Gastrocnemius medialis (tissue), 4 donors: ENCODE measurements at regions of chr16 and their contacts with region 1.

Region 1: DNA sequence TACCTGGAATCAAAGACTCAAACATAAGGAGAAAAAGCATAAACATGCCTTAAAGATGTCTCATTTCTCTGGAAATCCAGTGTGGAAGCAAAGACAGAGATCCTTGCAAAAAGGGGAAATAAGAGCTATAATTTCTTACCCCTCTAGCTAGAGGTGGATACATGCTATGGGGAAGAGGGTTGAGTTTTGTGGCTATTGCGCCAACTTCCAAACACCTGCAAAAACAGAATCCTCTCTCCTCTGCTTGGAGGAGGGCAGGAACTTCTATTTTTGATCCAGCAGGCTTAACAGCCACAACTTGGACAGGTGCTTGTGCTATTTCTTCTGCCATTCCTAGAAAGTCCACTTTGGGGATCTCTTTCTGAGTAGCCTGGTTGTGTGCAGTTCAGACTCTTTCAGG is 21.5 kb upstream of the NUDT7 start:
- DNase-seq: no peak
- ATAC-seq: no peak
- H3K4me3 ChIP-seq: no peak overlapping the region
- H3K27ac ChIP-seq: no peak overlapping the region
- H3K4me1 ChIP-seq: no peaks in the 10 kb centered on the region
- H3K27me3 ChIP-seq: no peaks in the 10 kb centered on the region
- CTCF ChIP-seq: no peak
- POLR2A ChIP-seq: no peak

Region 2: DNA sequence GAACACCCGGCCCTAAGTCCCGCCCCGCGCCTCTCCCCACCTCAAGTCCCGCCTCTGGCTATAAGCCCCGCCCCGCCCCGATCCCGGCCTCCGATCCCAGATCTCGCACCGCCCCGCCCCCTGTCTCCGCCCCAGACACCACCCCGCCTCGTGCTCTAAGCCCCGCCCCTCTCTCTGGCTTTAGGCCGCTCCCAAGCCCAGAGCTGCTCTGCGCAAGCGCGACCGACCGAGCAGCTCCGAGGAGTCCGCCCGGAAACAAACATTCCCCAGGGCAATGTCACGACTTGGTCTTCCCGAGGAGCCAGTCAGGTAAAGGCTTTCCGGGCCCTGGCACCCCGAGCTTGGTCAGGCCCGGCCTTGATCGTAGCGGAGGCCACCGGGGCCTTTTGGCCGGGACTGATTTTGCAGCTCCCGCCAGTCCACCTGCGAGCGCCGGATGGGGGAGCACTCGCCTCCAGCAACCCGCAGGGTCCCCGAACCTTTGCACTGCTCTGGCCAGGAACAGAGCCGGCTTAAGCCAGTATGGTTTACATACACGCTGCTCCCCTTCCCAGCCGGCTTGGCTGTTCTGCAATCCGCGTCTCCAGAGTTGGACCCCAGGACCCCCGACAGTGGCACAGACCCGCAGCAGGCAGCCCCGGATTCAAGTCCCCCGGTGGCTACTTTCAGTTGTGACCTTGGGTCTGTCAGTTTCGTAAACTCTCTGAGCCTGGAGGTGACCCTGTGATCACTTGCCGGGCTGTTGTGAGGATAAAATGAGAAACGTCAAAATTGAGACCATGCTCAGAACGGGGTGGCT is 21.7 kb after region 1 on chr16 and contains the start of gene NUDT7:
- in situ Hi-C with region 1: no loop called
- intact Hi-C with region 1: no loop called
- DNase-seq: peak; percentile 96 to 97
- ATAC-seq: peak; percentile 98 to 99
- H3K4me3 ChIP-seq: peak within 1 kb of the TSS; percentile 71 to 99 (median 84)
- H3K27ac ChIP-seq: peak within 1 kb of the TSS; percentile 85 to 87 (median 86)
- H3K4me1 ChIP-seq: peaks cover 5 to 6% of the 10 kb centered on the region in 2 donors
- H3K27me3 ChIP-seq: no peaks in the 10 kb centered on the region
- CTCF ChIP-seq: no peak
- POLR2A ChIP-seq: peak; percentile 38 to 40
- total RNA-seq, gene NUDT7: 2.3 to 11.0 (median 3.4) TPM

Region 3: GRCh38 chr16:77759821-77760220 is 59.0 kb after region 1 on chr16:
- in situ Hi-C with region 1: loop called in 1 of 4 experiments (anchors 10 kb)
- intact Hi-C with region 1: no loop called
- DNase-seq: no peak
- ATAC-seq: no peak
- H3K4me3 ChIP-seq: no peak overlapping the region
- H3K27ac ChIP-seq: no peak overlapping the region
- H3K4me1 ChIP-seq: no peaks in the 10 kb centered on the region
- H3K27me3 ChIP-seq: no peaks in the 10 kb centered on the region
- CTCF ChIP-seq: no peak
- POLR2A ChIP-seq: no peak

Region 4: DNA sequence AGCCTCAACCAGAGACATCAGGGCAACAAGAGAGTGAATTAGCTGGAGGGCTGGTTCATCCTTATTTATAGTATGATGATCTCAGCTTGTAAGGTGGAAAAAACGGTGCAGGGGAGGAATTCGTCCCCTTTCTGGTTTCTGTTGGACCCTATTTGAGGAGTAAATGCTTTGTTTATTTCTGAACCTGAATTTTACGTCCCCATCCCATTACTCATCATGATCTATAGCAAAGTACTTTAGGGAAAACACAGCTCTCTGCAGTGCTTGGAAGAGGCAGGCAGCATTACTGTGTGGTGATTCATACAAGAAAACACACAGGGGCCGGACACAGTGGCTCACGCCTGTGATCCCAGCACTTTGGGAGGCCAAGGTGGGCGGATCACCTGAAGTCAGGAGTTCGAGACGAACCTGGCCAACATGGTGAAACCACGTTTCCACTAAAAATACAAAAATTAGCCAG is 79.6 kb after region 1 on chr16:
- in situ Hi-C with region 1: no loop called
- intact Hi-C with region 1: no loop called
- DNase-seq: no peak
- ATAC-seq: no peak
- H3K4me3 ChIP-seq: no peak overlapping the region
- H3K27ac ChIP-seq: no peak overlapping the region
- H3K4me1 ChIP-seq: no peaks in the 10 kb centered on the region
- H3K27me3 ChIP-seq: peaks cover 0 to 2% (median 1%) of the 10 kb centered on the region in 3 donors
- CTCF ChIP-seq: no peak
- POLR2A ChIP-seq: no peak